ENCODE measurements at regions of chr7 and their contacts with region 1.

Region 1: DNA sequence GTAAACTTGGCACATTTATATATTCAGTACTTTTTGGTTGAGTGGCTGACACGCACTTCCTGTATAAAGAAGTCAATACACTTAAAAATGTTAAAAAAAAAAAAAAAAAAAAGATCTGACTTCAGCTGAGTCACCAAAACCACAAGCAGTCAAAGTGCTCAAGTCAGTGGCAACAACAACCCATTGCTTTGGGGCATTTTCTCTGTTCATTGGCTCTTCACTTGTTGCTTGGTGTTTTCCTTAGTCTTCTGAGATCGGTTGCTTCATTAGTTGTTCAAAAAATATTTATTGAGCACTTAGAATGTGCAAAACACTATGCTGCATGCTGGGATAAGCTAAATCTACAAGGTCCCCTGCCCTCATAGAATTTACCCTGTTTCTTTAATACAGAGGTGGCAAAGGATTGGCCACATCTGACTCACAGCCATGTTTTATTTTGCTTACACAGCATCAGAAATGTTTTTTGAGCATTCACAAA is 63.7 kb downstream of the ZNRF2 start:
- DNase-seq: peak; percentile 67
- H3K4me3 Mint-ChIP-seq: peak overlapping the region; percentile 50
- H3K27ac Mint-ChIP-seq: peak overlapping the region; percentile 86
- H3K4me1 Mint-ChIP-seq: peaks cover 52% of the 10 kb centered on the region
- H3K27me3 Mint-ChIP-seq: no peaks in the 10 kb centered on the region

Region 2: GRCh38 chr7:30164567-30164966 is 183.6 kb before region 1 on chr7:
- CTCF ChIA-PET with region 1: interaction called, 6 read pairs
- intact Hi-C with region 1: loop called (anchors 1 kb)
- DNase-seq: no peak
- H3K4me3 Mint-ChIP-seq: no peak overlapping the region
- H3K27ac Mint-ChIP-seq: peak overlapping the region; percentile 14
- H3K4me1 Mint-ChIP-seq: peaks cover 32% of the 10 kb centered on the region
- H3K27me3 Mint-ChIP-seq: no peaks in the 10 kb centered on the region

Region 3: DNA sequence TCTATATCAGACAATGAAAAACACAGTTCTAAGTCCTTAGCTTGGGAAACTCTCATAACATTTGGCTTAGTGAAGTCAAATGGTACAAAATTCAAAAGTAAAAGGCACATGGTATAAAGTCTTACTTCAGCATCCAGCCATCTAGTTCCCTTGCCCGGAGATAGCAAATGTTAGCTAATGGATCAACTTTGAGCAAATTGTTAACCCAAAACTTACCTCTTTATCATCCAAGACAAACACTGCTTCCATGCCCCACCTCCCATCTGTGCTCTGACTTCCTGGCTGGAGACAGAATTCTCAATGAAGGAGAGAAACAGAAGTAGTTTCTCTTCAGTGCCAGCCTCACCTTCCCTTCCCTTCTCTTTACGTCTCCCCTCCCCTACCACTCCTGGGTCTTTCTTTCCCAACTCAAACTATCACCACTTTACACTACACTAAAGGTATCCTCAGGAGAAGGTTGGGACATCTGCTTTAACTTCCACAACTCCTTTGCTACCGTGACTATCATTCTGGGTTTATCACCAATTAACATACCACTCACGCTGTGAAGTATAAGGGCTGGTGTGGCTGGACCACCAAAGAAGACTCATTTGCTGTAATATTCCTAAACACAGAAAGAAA is 84.9 kb before region 1 on chr7:
- CTCF ChIA-PET with region 1: no interaction called
- intact Hi-C with region 1: no loop called
- DNase-seq: no peak
- H3K4me3 Mint-ChIP-seq: no peak overlapping the region
- H3K27ac Mint-ChIP-seq: no peak overlapping the region
- H3K4me1 Mint-ChIP-seq: no peaks in the 10 kb centered on the region
- H3K27me3 Mint-ChIP-seq: peaks cover 2% of the 10 kb centered on the region

Region 4: GRCh38 chr7:30284298-30285066 is 63.6 kb before region 1 on chr7 and contains the start of gene ZNRF2:
- CTCF ChIA-PET with region 1: interaction called, 6 read pairs
- intact Hi-C with region 1: loop called (anchors 1 kb)
- DNase-seq: peak; percentile 99
- H3K4me3 Mint-ChIP-seq: peak within 1 kb of the TSS; percentile 79
- H3K27ac Mint-ChIP-seq: peak within 1 kb of the TSS; percentile 84
- H3K4me1 Mint-ChIP-seq: peaks cover 39% of the 10 kb centered on the region
- H3K27me3 Mint-ChIP-seq: no peaks in the 10 kb centered on the region
- total RNA-seq, gene ZNRF2: 10.4 to 10.5 TPM

Region 5: GRCh38 chr7:30330134-30331111 is 17.7 kb before region 1 on chr7:
- CTCF ChIA-PET with region 1: interaction called, 3 read pairs
- intact Hi-C with region 1: loop called (anchors 1 kb)
- DNase-seq: peak; percentile 52
- H3K4me3 Mint-ChIP-seq: peak overlapping the region; percentile 54
- H3K27ac Mint-ChIP-seq: peak overlapping the region; percentile 48
- H3K4me1 Mint-ChIP-seq: peaks cover 44% of the 10 kb centered on the region
- H3K27me3 Mint-ChIP-seq: no peaks in the 10 kb centered on the region

Region 6: DNA sequence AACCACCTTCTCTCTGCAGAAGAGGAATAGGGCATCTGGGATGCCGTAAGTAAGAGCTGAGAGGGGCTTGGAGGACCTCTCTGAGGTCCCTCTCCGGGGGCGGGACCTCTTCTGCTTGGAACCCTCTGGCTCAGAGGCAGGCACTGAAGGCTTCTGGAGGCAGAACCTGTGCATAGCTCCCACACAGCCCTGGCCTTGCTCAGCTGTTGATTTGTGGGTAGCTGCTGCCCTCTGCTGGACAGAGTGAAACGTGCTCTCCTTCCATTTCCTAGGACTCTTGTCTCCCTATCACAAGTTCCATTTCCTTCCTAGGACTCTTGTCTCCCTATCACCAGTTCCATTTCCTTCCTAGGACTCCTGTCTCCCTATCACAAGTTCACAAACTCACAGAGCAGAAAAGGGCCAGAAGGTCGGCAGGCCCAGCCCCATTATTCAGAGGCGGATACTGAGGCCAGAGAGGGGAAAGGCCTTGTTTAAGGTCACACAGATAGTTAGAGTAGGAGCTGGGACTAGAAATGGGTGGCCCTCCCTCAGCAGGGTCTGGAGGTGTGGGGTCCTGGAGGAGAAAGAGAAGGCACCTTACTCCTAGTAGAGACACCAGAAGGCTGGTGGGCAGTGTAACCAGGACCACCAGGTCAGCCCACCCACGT is 216.2 kb after region 1 on chr7:
- CTCF ChIA-PET with region 1: no interaction called
- intact Hi-C with region 1: loop called (anchors 10 kb)
- DNase-seq: peak; percentile 85
- H3K4me3 Mint-ChIP-seq: no peak overlapping the region
- H3K27ac Mint-ChIP-seq: no peak overlapping the region
- H3K4me1 Mint-ChIP-seq: no peaks in the 10 kb centered on the region
- H3K27me3 Mint-ChIP-seq: no peaks in the 10 kb centered on the region

Region 7: GRCh38 chr7:30845426-30846135 is 497.5 kb after region 1 on chr7:
- CTCF ChIA-PET with region 1: no interaction called
- intact Hi-C with region 1: no loop called
- DNase-seq: no peak
- H3K4me3 Mint-ChIP-seq: no peak overlapping the region
- H3K27ac Mint-ChIP-seq: no peak overlapping the region
- H3K4me1 Mint-ChIP-seq: no peaks in the 10 kb centered on the region
- H3K27me3 Mint-ChIP-seq: no peaks in the 10 kb centered on the region